K562 (cell line): ENCODE measurements at regions of chr22 and their contacts with region 1.

Region 1: DNA sequence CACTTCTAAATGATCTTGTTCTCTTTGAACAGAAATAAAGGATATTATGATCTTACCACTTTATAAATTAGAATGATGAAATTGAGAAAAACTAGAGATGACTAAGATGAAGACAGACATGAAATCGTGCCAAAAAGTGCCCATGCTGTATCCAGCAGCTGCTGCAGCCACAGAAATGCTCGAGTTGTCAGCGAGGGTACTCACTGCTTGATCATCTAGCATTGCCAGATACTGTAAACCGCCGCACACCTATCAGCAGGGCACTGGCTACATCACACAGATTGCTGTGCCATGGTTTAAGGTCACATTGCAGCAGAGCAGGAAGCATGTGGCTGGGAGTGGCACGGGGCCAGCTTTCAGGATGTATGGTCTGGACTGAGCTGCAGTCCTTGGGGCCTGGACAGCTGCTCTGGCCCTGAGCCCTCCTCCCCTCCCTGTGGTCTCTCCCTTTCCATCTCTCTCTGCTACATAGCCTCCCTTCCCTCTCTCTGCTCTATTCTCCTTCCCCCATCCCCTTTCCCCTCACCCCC is 51.0 kb upstream of the SEPTIN5 start:
- DNase-seq: peak in 1 of 4 experiments; percentile 29
- ATAC-seq: peak; percentile 24
- H3K4me3 ChIP-seq: no peak overlapping the region
- H3K27ac ChIP-seq: no peak overlapping the region
- H3K4me1 ChIP-seq: peaks cover 15 to 23% of the 10 kb centered on the region in 2 experiments
- H3K27me3 ChIP-seq: peaks cover 55 to 58% of the 10 kb centered on the region in 2 experiments
- CTCF ChIP-seq: no peak
- EP300 ChIP-seq: no peak
- POLR2A ChIP-seq: no peak
- RAD21 ChIP-seq: no peak

Region 2: GRCh38 chr22:19652316-19652715 is 11.0 kb before region 1 on chr22:
- CTCF ChIA-PET with region 1: no interaction called
- POLR2A ChIA-PET with region 1: interaction called, 10 read pairs
- in situ Hi-C with region 1: no loop called
- intact Hi-C with region 1: no loop called
- DNase-seq: no peak
- ATAC-seq: no peak
- H3K4me3 ChIP-seq: no peak overlapping the region
- H3K27ac ChIP-seq: no peak overlapping the region
- H3K4me1 ChIP-seq: peaks cover 0 to 6% of the 10 kb centered on the region in 2 experiments; a peak in 1 of 5 replicates
- H3K27me3 ChIP-seq: peaks cover 0 to 5% of the 10 kb centered on the region in 2 experiments; a peak in 3 of 5 replicates
- CTCF ChIP-seq: no peak
- EP300 ChIP-seq: no peak
- POLR2A ChIP-seq: no peak
- RAD21 ChIP-seq: no peak

Region 3: GRCh38 chr22:19717691-19718455 is 54.5 kb after region 1 on chr22:
- CTCF ChIA-PET with region 1: interaction called, 6 read pairs
- POLR2A ChIA-PET with region 1: interaction called, 4 read pairs
- in situ Hi-C with region 1: no loop called
- intact Hi-C with region 1: loop called (anchors 10 kb)
- DNase-seq: peak; percentile 98 to 99 (median 98)
- ATAC-seq: peak; percentile 69
- H3K4me3 ChIP-seq: peak overlapping the region; percentile 51
- H3K27ac ChIP-seq: peak overlapping the region; percentile 92
- H3K4me1 ChIP-seq: peaks cover 62 to 97% of the 10 kb centered on the region in 2 experiments
- H3K27me3 ChIP-seq: peaks cover 0 to 10% of the 10 kb centered on the region in 2 experiments; a peak in 2 of 5 replicates
- CTCF ChIP-seq: peak; percentile 98 to 100 (median 98)
- EP300 ChIP-seq: peak; percentile 47; the same call in 1 of the 2 replicates
- POLR2A ChIP-seq: peak; percentile 2; the same call in 1 of the 2 replicates
- RAD21 ChIP-seq: peak in 1 of 2 experiments; percentile 100; a peak in 2 of 4 replicates